Activated naive CD8-positive, alpha-beta T cell treated with anti-CD3 and anti-CD28 coated beads, Interleukin-2, amount 10 ng/mL, durations not matched to agents 7 days and 5 days (primary cell): ENCODE measurements at regions of chr5 and their contacts with region 1.

Region 1: GRCh38 chr5:150778517-150779396 is at the start of gene SMIM3:
- DNase-seq: peak; percentile 74
- ATAC-seq: peak; percentile 57
- H3K4me3 Mint-ChIP-seq: peak within 1 kb of the TSS; percentile 100
- H3K27ac Mint-ChIP-seq: peak within 1 kb of the TSS; percentile 97
- H3K4me1 Mint-ChIP-seq: peaks cover 55% of the 10 kb centered on the region
- H3K27me3 Mint-ChIP-seq: peaks cover 4% of the 10 kb centered on the region
- total RNA-seq, gene SMIM3: 15.7 to 16.8 TPM

Region 2: GRCh38 chr5:150286890-150287219 is 491.9 kb before region 1 on chr5:
- POLR2A ChIA-PET with region 1: no interaction called
- DNase-seq: no peak
- ATAC-seq: peak; percentile 47
- H3K4me3 Mint-ChIP-seq: no peak overlapping the region
- H3K27ac Mint-ChIP-seq: no peak overlapping the region
- H3K4me1 Mint-ChIP-seq: no peaks in the 10 kb centered on the region
- H3K27me3 Mint-ChIP-seq: peaks cover 11% of the 10 kb centered on the region

Region 3: GRCh38 chr5:150449517-150450339 is 329.0 kb before region 1 on chr5 and contains the start of gene RPS14:
- POLR2A ChIA-PET with region 1: interaction called, 10 read pairs
- DNase-seq: peak; percentile 94
- ATAC-seq: peak; percentile 90
- H3K4me3 Mint-ChIP-seq: peak within 1 kb of the TSS; percentile 96
- H3K27ac Mint-ChIP-seq: peak within 1 kb of the TSS; percentile 99
- H3K4me1 Mint-ChIP-seq: peaks cover 28% of the 10 kb centered on the region
- H3K27me3 Mint-ChIP-seq: no peaks in the 10 kb centered on the region
- total RNA-seq, gene RPS14: 2,811 to 2,872 TPM

Region 4: DNA sequence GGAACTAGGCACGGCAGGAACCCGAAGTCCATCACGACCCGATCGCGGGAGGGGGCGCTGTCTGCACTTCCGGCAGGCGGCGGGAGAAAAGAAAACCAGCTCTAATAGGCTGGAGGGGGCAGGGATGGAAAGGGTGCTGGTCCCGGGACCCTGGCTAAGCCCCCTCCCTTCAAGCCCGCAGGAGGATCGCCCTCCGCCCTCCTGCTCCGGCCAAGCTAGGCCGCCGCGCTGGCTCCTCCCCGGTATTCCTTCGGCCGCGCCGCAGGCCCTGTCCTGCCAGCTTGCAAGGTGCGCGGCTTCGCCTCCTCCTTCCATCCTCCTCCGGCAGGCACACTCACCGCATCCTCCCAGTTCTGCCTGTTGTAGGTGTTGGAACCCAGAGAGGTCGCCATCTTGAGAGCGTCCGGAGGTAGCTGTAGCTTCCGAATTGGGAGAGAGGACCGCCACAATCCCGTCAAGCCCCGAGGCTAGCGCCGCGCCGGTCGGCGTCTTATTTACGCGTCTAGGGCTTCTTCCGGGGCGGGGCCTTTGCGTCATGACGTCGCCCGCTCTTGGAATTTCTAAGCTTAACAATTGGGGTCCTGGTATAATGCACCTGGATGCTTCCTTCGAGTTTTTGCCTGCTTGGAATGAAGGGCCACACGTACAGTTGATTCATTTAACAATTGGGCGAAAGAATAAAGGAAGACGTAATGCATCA is 78.0 kb before region 1 on chr5 and contains the start of gene RBM22:
- POLR2A ChIA-PET with region 1: interaction called, 25 read pairs
- DNase-seq: peak; percentile 89
- ATAC-seq: peak; percentile 97
- H3K4me3 Mint-ChIP-seq: no peak within 1 kb of the TSS
- H3K27ac Mint-ChIP-seq: no peak within 1 kb of the TSS
- H3K4me1 Mint-ChIP-seq: peaks cover 7% of the 10 kb centered on the region
- H3K27me3 Mint-ChIP-seq: no peaks in the 10 kb centered on the region
- total RNA-seq, gene RBM22: 72.9 to 74.6 TPM

Region 5: DNA sequence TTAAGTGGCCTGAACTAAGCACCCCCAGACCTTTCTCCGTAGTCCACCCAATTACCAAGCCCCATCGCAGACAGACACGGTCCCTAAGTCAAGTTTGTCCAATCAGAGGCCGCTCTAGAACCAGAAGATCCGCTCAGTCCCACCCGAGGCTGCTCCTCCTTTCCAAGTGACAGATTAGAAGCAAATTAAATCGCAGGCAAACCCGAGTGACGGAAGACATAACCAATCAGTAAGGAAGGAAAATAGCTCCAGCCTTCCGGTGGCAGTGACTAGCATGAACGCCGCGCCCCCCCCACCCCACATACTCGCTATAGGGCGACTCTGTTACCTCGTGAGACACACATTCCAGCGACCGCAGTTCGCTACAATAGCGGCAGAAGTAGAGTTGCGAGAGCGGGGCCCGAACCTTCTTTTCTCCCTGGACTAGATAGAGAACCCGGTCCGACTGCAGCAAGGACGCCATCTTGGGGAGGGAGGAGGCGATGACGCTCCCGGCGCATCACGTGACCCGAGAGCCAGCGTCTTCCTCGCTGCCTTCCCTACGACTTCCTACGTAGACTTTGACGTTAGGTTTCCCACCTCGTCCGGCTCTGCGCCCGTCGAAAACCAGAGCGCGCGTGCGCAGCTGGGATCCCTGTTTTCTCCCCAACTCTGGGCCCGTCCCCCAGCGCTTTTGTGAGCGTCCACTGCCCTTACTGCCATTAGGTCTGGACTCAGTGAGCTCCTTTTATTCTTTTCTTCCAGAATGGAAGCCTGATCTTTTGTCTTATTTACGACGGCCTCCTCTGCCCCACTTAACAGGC is 20.0 kb before region 1 on chr5 and contains the start of gene DCTN4:
- POLR2A ChIA-PET with region 1: interaction called, 17 read pairs
- DNase-seq: peak; percentile 91
- ATAC-seq: peak; percentile 97
- H3K4me3 Mint-ChIP-seq: no peak within 1 kb of the TSS
- H3K27ac Mint-ChIP-seq: peak within 1 kb of the TSS; percentile 17
- H3K4me1 Mint-ChIP-seq: peaks cover 32% of the 10 kb centered on the region
- H3K27me3 Mint-ChIP-seq: no peaks in the 10 kb centered on the region
- total RNA-seq, gene DCTN4: 43.2 to 43.3 TPM

Region 6: DNA sequence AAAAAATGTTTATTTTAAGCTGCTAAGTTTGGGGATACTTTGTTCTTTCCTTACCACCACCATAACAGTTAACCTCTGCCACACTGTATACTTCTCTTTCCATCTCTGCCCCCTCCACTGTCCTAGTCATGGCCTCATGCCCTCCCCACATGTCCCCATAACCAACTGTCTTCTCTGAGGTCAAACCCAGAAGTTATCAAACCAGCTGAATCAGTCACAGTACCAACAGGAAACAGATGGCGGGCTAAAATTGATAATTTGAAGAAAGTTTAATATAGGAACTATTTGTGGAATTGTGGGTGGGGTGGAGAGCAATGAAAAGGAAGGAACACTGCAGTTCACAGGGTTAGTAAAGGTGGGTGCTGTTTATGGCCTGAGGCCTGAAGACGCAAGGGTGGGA is 14.2 kb before region 1 on chr5:
- POLR2A ChIA-PET with region 1: interaction called, 17 read pairs
- DNase-seq: no peak
- ATAC-seq: no peak
- H3K4me3 Mint-ChIP-seq: no peak overlapping the region
- H3K27ac Mint-ChIP-seq: peak overlapping the region; percentile 77
- H3K4me1 Mint-ChIP-seq: peaks cover 20% of the 10 kb centered on the region
- H3K27me3 Mint-ChIP-seq: peaks cover 2% of the 10 kb centered on the region

Region 7: GRCh38 chr5:150789943-150790611 is 11.3 kb after region 1 on chr5:
- POLR2A ChIA-PET with region 1: interaction called, 12 read pairs
- DNase-seq: peak; percentile 43
- ATAC-seq: peak; percentile 99
- H3K4me3 Mint-ChIP-seq: peak overlapping the region; percentile 70
- H3K27ac Mint-ChIP-seq: peak overlapping the region; percentile 69
- H3K4me1 Mint-ChIP-seq: peaks cover 45% of the 10 kb centered on the region
- H3K27me3 Mint-ChIP-seq: no peaks in the 10 kb centered on the region

Region 8: DNA sequence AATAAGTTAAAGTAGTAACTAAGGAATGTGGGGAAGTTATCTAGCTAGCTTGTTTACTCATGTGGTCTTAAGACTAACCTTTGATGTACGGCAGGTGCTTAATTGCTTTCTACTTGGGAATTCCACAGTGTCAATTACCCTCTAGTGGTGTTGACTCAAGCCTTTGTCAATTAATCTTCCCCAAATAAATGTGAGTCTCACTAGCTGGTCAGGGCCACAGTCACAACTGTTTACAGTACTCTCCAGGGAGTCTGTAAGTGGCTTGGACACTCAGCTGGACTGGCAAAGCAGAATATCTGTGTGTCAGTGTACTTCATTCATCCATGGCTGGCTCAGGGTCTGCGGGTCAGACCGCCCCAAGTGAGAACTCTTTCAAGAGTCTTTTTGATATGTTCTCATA is 30.6 kb after region 1 on chr5:
- POLR2A ChIA-PET with region 1: no interaction called
- DNase-seq: no peak
- ATAC-seq: no peak
- H3K4me3 Mint-ChIP-seq: no peak overlapping the region
- H3K27ac Mint-ChIP-seq: no peak overlapping the region
- H3K4me1 Mint-ChIP-seq: peaks cover 2% of the 10 kb centered on the region
- H3K27me3 Mint-ChIP-seq: peaks cover 2% of the 10 kb centered on the region

Region 9: GRCh38 chr5:150836703-150837102 is 57.9 kb after region 1 on chr5:
- POLR2A ChIA-PET with region 1: no interaction called
- DNase-seq: no peak
- ATAC-seq: no peak
- H3K4me3 Mint-ChIP-seq: no peak overlapping the region
- H3K27ac Mint-ChIP-seq: no peak overlapping the region
- H3K4me1 Mint-ChIP-seq: no peaks in the 10 kb centered on the region
- H3K27me3 Mint-ChIP-seq: peaks cover 21% of the 10 kb centered on the region

Region 10: GRCh38 chr5:150846654-150847333 is 68.0 kb after region 1 on chr5:
- POLR2A ChIA-PET with region 1: interaction called, 61 read pairs
- DNase-seq: peak; percentile 66
- ATAC-seq: peak; percentile 89
- H3K4me3 Mint-ChIP-seq: peak overlapping the region; percentile 82
- H3K27ac Mint-ChIP-seq: peak overlapping the region; percentile 97
- H3K4me1 Mint-ChIP-seq: peaks cover 28% of the 10 kb centered on the region
- H3K27me3 Mint-ChIP-seq: no peaks in the 10 kb centered on the region

Region 11: DNA sequence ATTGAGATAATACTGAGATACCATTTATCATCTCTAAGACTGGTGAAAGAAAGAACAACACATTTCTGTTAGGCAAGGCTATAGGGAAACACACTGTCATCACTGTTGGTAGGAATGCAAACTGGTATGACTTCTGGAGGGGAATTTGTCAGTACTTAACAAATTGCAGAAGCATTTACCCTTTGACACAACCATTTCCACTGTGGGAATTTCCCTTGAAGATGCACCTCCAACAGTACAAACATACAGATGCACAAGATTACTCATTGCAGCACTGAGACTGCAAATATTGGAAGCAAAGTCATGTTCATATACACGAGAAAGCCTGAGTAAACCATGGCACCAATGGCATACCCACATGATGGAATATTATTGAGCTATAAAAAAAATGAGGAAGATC is 491.8 kb after region 1 on chr5:
- POLR2A ChIA-PET with region 1: no interaction called
- DNase-seq: no peak
- ATAC-seq: no peak
- H3K4me3 Mint-ChIP-seq: no peak overlapping the region
- H3K27ac Mint-ChIP-seq: no peak overlapping the region
- H3K4me1 Mint-ChIP-seq: no peaks in the 10 kb centered on the region
- H3K27me3 Mint-ChIP-seq: no peaks in the 10 kb centered on the region